Calu3 (cell line): ENCODE measurements at regions of chr2 and their contacts with region 1.

Region 1: GRCh38 chr2:20291106-20291564 is 59.5 kb downstream of the PUM2 start:
- DNase-seq: peak; percentile 78
- H3K4me3 Mint-ChIP-seq: no peak overlapping the region
- H3K27ac Mint-ChIP-seq: no peak overlapping the region
- H3K4me1 Mint-ChIP-seq: peaks cover 11% of the 10 kb centered on the region
- H3K27me3 Mint-ChIP-seq: no peaks in the 10 kb centered on the region
- CTCF ChIP-seq: peak; percentile 69

Region 2: DNA sequence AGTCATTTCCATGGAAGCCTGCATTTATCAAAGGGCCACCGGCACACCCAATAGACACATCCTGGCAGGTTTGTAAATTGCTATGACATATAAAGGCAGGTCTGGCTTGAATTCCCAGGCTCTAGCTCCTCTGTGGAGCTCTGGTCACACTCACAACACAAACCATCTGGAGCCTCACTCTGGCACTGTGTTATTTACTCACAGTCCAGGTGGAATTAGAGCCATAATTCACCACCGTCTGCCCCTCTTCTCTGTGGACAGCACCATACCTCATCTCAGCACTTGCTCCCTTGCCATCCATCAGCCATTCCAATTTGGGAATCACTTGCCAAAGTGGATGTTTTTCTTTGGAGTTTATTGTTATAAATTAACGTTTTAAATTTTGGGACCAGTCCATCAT is 848.4 kb before region 1 on chr2:
- CTCF ChIA-PET with region 1: no interaction called
- intact Hi-C with region 1: no loop called
- DNase-seq: no peak
- H3K4me3 Mint-ChIP-seq: no peak overlapping the region
- H3K27ac Mint-ChIP-seq: no peak overlapping the region
- H3K4me1 Mint-ChIP-seq: no peaks in the 10 kb centered on the region
- H3K27me3 Mint-ChIP-seq: no peaks in the 10 kb centered on the region
- CTCF ChIP-seq: no peak

Region 3: DNA sequence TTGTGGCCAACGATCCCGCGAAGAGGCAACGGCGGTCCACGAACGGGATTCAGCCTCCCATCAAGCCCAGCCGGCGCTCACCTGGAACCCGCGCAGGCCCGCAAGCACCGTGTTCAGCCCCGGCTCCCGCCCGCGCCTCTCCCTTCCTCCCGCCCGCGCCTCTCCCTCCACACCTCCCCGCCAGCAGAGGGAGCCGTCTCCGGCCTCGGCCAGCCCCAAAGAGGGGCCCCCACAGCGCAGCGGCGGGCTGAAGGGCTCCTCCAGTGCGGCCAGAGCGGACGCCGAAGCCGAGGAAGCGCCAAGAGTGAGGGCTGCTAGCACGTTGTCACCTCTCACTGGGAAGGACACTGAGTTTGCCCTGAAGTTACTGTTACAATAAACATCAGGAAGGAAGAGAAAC is 184.4 kb before region 1 on chr2:
- CTCF ChIA-PET with region 1: interaction called, 4 read pairs
- intact Hi-C with region 1: loop called (anchors 5 kb)
- DNase-seq: peak; percentile 93
- H3K4me3 Mint-ChIP-seq: peak overlapping the region; percentile 68
- H3K27ac Mint-ChIP-seq: peak overlapping the region; percentile 46
- H3K4me1 Mint-ChIP-seq: peaks cover 28% of the 10 kb centered on the region
- H3K27me3 Mint-ChIP-seq: no peaks in the 10 kb centered on the region
- CTCF ChIP-seq: peak; percentile 67

Region 4: DNA sequence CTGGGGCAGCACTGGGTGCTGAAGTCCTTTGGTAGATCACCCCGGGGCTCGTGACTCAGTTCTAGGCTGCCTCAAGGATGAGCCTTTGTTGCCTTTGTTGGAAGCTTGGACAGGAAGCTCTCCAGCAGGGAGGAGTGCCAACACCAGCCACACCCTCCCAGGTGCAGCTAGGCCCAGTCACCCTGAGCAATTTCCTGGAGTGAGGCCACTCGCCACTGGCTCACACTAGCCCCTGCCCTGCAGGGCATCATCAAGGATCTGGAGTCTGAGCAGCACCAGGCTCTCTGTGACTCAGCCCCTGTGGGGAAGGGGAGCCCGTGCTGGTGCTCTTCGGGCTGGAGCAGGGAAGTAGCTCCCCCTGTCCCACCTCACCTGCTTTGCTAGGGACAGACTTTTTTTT is 59.5 kb before region 1 on chr2:
- CTCF ChIA-PET with region 1: interaction called, 4 read pairs
- intact Hi-C with region 1: loop called (anchors 2 kb)
- DNase-seq: peak; percentile 93
- H3K4me3 Mint-ChIP-seq: peak overlapping the region; percentile 4
- H3K27ac Mint-ChIP-seq: peak overlapping the region; percentile 90
- H3K4me1 Mint-ChIP-seq: peaks cover 54% of the 10 kb centered on the region
- H3K27me3 Mint-ChIP-seq: no peaks in the 10 kb centered on the region
- CTCF ChIP-seq: no peak

Region 5: DNA sequence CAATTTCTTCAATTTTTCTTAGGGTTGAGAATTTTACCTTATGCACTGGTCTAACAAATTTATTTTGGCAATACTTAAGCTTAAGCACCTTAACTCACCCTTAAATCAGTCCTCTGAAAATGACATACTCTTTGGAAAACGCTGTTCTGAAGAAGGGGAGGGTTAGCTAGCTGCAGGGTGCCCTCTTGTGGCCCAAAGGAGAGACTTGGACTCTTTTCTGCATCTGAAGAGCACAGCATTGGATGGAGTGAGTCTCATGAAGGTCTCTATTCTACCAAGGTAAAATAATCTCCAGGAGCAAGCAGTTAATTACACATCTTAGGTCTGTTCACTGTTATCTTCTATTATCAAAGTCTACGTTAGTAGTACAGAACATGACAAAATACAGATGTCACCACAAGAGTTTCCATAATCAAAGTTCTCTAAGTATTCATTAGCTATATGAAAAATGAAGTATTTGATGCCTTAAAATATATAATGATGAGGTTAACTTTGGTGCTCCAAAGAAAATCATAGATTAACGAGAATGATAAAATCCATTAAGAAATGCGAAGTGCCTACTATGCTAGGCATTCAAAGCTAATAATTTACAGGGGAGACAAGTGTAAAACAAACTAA is 35.1 kb after region 1 on chr2:
- CTCF ChIA-PET with region 1: interaction called, 3 read pairs
- intact Hi-C with region 1: loop called (anchors 5 kb)
- DNase-seq: peak; percentile 60
- H3K4me3 Mint-ChIP-seq: peak overlapping the region; percentile 6
- H3K27ac Mint-ChIP-seq: peak overlapping the region; percentile 28
- H3K4me1 Mint-ChIP-seq: peaks cover 49% of the 10 kb centered on the region
- H3K27me3 Mint-ChIP-seq: no peaks in the 10 kb centered on the region
- CTCF ChIP-seq: peak; percentile 58

Region 6: GRCh38 chr2:20350041-20350712 is 59.0 kb after region 1 on chr2:
- CTCF ChIA-PET with region 1: no interaction called
- intact Hi-C with region 1: no loop called
- DNase-seq: peak; percentile 62
- H3K4me3 Mint-ChIP-seq: no peak overlapping the region
- H3K27ac Mint-ChIP-seq: peak overlapping the region; percentile 81
- H3K4me1 Mint-ChIP-seq: peaks cover 20% of the 10 kb centered on the region
- H3K27me3 Mint-ChIP-seq: no peaks in the 10 kb centered on the region
- CTCF ChIP-seq: no peak